ENCODE measurements at regions of chr11 and their contacts with region 1.

Region 1: GRCh38 chr11:10803676-10804075 is 5.0 kb downstream of the EIF4G2 start:
- DNase-seq: no peak
- H3K4me3 Mint-ChIP-seq: no peak overlapping the region
- H3K27ac Mint-ChIP-seq: peak overlapping the region; percentile 92
- H3K4me1 Mint-ChIP-seq: peaks cover 79% of the 10 kb centered on the region
- H3K27me3 Mint-ChIP-seq: no peaks in the 10 kb centered on the region

Region 2: DNA sequence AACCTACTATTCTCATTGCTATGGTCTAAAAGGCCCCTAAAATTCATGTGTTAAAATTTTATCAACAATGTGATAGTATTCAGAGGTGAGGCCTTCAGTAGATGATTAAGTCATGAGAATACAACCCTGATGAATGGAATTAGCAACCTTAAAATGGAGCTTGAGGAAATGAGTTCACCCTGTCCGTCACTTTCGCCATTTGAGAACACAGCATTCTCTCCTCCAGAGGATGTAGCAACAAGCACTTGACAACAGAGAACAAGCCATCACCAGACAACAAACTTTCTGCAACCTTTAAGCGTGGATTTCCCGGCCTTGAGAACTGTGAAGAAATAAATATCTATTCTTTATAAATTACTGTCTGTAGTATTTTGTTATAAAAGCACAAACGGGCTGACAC is 706.7 kb before region 1 on chr11:
- CTCF ChIA-PET with region 1: no interaction called
- POLR2A ChIA-PET with region 1: no interaction called
- intact Hi-C with region 1: no loop called
- DNase-seq: no peak
- H3K4me3 Mint-ChIP-seq: no peak overlapping the region
- H3K27ac Mint-ChIP-seq: no peak overlapping the region
- H3K4me1 Mint-ChIP-seq: peaks cover 2% of the 10 kb centered on the region
- H3K27me3 Mint-ChIP-seq: no peaks in the 10 kb centered on the region

Region 3: DNA sequence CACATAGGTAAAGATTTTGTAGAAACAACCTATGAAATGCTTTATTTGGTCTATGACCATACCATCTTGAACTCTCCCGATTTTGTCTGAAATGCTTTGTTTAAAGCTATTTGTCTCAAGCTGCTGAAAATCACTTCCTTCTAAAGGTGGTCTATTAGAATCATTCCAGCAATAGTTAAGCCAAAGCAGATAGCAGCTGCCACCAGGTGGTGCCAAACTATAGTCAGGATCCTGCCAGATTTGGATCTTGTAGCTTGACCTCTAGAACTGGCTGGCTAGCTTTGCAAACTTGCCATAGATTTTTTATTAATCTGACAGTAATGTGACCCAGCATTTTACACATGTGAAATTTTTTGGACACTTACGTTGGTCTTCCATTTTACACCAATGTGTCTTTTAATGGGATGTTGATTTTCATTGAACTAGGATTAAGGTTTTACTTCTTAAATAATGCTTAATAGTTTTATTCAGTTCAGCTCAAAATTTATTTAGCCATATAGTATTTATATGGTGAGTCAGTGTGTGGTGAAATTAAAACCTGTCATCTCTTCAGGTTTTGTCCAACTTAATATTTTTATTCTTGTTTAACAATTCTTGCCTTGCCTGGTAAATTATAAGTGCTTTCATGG is 32.9 kb before region 1 on chr11:
- CTCF ChIA-PET with region 1: interaction called, 18 read pairs
- POLR2A ChIA-PET with region 1: interaction called, 4 read pairs
- intact Hi-C with region 1: no loop called
- DNase-seq: peak; percentile 41
- H3K4me3 Mint-ChIP-seq: no peak overlapping the region
- H3K27ac Mint-ChIP-seq: no peak overlapping the region
- H3K4me1 Mint-ChIP-seq: no peaks in the 10 kb centered on the region
- H3K27me3 Mint-ChIP-seq: no peaks in the 10 kb centered on the region

Measured in activated CD4-positive, alpha-beta memory T cell treated with anti-CD3 and anti-CD28 coated beads for 36 hours (primary cell).